ENCODE measurements at regions of chr20 and their contacts with region 1.

Region 1: DNA sequence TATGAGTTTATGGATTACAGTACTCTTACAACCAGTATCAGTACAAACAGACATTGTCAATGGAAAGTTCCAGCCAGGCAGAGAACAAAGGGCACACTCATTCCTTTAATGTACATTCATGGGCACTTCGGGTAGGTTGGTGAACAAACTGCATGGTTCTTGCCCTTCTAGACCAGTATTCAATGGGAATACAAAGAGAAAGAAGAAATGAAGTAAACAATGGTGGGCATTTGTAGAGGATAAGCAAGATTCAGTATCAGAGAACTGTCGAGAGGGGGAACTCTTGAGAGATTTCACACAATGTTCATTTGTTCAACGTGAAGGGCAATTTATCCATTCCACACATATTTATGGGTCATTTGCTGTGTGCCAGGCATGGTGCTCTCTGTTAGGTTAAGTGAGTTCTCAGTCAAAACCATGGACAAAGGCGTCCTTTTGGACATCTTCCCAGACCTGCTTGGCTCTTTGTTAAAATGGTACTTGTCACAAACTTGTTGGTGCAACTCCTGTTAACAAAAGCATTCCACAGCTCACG is 714.8 kb downstream of the DHX35 start:
- DNase-seq: peak in 1 of 2 donors; percentile 64
- H3K4me3 ChIP-seq: no peak overlapping the region
- H3K27ac ChIP-seq: no peak overlapping the region
- H3K4me1 ChIP-seq: no peaks in the 10 kb centered on the region
- H3K27me3 ChIP-seq: no peaks in the 10 kb centered on the region
- CTCF ChIP-seq: peak in 1 of 3 donors; percentile 16
- POLR2A ChIP-seq: no peak

Region 2: DNA sequence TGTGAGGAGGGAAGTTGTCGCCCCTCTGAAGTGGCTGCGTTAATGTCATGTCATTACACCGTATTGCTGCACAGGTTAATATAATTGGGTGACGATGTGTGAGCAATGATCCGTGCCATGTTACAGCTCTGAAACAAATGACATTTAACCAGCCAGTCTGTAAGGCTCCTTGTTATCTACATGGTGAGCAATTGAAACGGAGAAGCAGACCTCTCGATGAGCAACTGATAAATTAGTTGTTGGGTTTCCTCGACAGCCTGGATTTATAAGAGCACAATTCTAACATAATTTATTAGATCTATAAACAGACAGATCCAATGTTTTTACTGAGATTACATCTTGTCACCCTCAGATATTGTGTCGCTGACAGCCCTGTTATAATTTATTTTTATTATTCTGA is 1062.1 kb after region 1 on chr20:
- intact Hi-C with region 1: loop called (anchors 5 kb)
- DNase-seq: no peak
- H3K4me3 ChIP-seq: no peak overlapping the region
- H3K27ac ChIP-seq: no peak overlapping the region
- H3K4me1 ChIP-seq: no peaks in the 10 kb centered on the region
- H3K27me3 ChIP-seq: no peaks in the 10 kb centered on the region
- CTCF ChIP-seq: no peak
- POLR2A ChIP-seq: no peak

Measured in breast epithelium (tissue), 4 donors.